ENCODE measurements at regions of chr15 and their contacts with region 1.

Region 1: DNA sequence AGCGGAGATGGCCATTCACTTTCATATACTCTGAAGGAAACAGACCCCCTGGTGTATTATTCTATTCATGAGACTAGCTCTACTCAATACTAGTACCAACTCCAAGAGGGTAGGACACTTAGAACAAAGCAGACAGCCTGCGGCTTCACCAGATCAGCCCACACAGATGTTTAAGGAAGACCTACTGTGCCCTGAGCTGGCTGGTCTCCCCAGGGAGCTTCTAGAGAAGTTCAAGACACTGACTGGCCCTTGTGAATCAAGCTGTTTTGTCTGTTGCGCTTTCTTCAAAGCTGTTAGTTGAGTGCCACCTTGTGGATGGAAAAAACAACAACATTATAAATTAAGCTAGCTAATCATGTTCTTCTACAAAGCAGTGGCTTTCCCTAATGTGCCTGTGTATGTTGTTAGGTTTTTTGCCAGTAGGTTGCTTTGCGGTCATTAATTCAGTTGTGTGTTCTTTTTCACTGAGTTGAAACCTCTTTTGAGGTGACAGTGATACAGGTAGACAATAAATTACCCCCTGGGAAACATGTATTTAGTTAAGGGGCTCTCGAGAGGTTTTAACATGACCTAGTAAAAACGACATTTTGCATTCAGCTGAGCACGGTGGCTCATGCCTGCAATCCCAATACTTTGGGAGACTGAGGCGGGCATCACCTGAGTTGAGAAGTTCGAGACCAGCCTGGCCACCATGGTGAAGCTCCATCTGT is 64.2 kb upstream of the MYZAP start:
- H3K4me3 ChIP-seq: no peak overlapping the region
- H3K27ac ChIP-seq: no peak overlapping the region
- H3K4me1 ChIP-seq: no peaks in the 10 kb centered on the region
- CTCF ChIP-seq: no peak

Region 2: GRCh38 chr15:57146506-57147201 is 380.9 kb before region 1 on chr15:
- CTCF ChIA-PET with region 1: interaction called, 12 read pairs
- POLR2A ChIA-PET with region 1: no interaction called
- H3K4me3 ChIP-seq: no peak overlapping the region
- H3K27ac ChIP-seq: no peak overlapping the region
- H3K4me1 ChIP-seq: peaks cover 5% of the 10 kb centered on the region; the same call in 1 of the 2 replicates
- CTCF ChIP-seq: no peak

Region 3: DNA sequence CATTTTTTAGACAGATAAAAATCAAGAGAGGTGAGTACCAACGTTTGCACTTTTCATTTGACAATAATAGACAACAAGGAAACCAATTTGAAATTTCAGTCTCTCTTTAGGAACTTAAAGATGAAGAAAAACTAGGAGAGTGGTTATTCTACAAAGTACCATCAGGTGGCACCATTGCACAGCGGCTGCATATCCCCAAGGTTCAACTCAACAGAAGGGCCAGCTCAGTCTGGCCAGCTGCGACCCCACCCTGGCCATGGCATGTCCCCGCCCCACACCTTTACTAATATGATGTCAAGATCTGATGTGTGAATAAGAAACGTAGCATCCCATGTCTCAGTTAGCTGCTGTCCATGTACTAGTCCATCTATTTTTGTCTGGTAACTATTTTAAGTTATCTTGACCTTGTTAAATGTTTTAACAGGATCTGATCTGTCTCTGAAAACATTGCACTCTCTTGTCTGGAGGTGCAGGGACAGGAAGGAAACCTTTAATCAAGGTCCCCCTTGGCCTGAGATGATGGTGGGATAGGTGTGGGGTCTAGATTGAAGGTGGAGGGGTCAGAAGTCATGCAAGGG is 186.8 kb before region 1 on chr15:
- CTCF ChIA-PET with region 1: interaction called, 201 read pairs
- POLR2A ChIA-PET with region 1: interaction called, 6 read pairs
- H3K4me3 ChIP-seq: no peak overlapping the region
- H3K27ac ChIP-seq: no peak overlapping the region
- H3K4me1 ChIP-seq: no peaks in the 10 kb centered on the region
- CTCF ChIP-seq: peak; percentile 44; the same call in 1 of the 2 replicates

Region 4: GRCh38 chr15:57541805-57542504 is 14.4 kb after region 1 on chr15:
- CTCF ChIA-PET with region 1: interaction called, 13 read pairs
- POLR2A ChIA-PET with region 1: no interaction called
- H3K4me3 ChIP-seq: no peak overlapping the region
- H3K27ac ChIP-seq: no peak overlapping the region
- H3K4me1 ChIP-seq: peaks cover 2% of the 10 kb centered on the region; the same call in 1 of the 2 replicates
- CTCF ChIP-seq: peak; percentile 14; the same call in 1 of the 2 replicates